ENCODE measurements at regions of chr12 and their contacts with region 1.

Region 1: DNA sequence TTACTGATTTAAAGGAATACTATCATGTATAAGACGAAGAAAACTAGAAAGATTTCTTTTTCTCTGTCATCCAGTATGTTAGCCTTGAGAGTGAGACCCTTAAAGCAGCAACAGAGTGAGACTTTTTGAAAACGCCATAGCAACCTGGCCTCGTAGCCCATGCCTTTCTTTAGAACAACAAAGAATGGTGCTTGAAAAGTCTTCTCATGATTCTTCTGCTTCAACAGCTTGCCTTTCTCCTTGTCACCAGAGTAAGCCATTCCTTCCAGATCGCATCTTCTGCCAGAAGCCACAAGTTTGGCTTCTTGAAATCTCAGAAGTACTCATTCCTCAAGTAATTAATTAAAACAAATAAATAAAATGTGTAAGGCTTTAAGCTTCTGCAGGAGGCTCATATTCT is 109.3 kb downstream of the PDE3A start:
- DNase-seq: no peak
- H3K4me3 ChIP-seq: no peak overlapping the region
- H3K4me3 Mint-ChIP-seq: no peak overlapping the region
- H3K27ac ChIP-seq: no peak overlapping the region
- H3K27ac Mint-ChIP-seq: no peak overlapping the region
- H3K4me1 ChIP-seq: no peaks in the 10 kb centered on the region
- H3K4me1 Mint-ChIP-seq: peaks cover 0 to 2% (median 0%) of the 10 kb centered on the region in 4 donors
- H3K27me3 ChIP-seq: no peaks in the 10 kb centered on the region
- H3K27me3 Mint-ChIP-seq: peaks cover 0 to 1% of the 10 kb centered on the region in 2 donors

Region 2: GRCh38 chr12:18798535-18799361 is 1678.9 kb before region 1 on chr12:
- CTCF ChIA-PET with region 1: no interaction called
- POLR2A ChIA-PET with region 1: no interaction called
- intact Hi-C with region 1: loop called (anchors 5 kb)
- DNase-seq: no peak
- H3K4me3 ChIP-seq: no peak overlapping the region
- H3K4me3 Mint-ChIP-seq: no peak overlapping the region
- H3K27ac ChIP-seq: no peak overlapping the region
- H3K27ac Mint-ChIP-seq: no peak overlapping the region
- H3K4me1 ChIP-seq: no peaks in the 10 kb centered on the region
- H3K4me1 Mint-ChIP-seq: no peaks in the 10 kb centered on the region
- H3K27me3 ChIP-seq: no peaks in the 10 kb centered on the region
- H3K27me3 Mint-ChIP-seq: no peaks in the 10 kb centered on the region

Region 3: GRCh38 chr12:20415028-20415427 is 62.6 kb before region 1 on chr12:
- CTCF ChIA-PET with region 1: no interaction called
- POLR2A ChIA-PET with region 1: no interaction called
- intact Hi-C with region 1: no loop called
- DNase-seq: no peak
- H3K4me3 ChIP-seq: no peak overlapping the region
- H3K4me3 Mint-ChIP-seq: no peak overlapping the region
- H3K27ac ChIP-seq: no peak overlapping the region
- H3K27ac Mint-ChIP-seq: no peak overlapping the region
- H3K4me1 ChIP-seq: no peaks in the 10 kb centered on the region
- H3K4me1 Mint-ChIP-seq: no peaks in the 10 kb centered on the region
- H3K27me3 ChIP-seq: no peaks in the 10 kb centered on the region
- H3K27me3 Mint-ChIP-seq: peaks cover 0 to 1% of the 10 kb centered on the region in 2 donors

Measured in CD4-positive, alpha-beta memory T cell (primary cell).